ENCODE measurements at regions of chr5 and their contacts with region 1.

Region 1: DNA sequence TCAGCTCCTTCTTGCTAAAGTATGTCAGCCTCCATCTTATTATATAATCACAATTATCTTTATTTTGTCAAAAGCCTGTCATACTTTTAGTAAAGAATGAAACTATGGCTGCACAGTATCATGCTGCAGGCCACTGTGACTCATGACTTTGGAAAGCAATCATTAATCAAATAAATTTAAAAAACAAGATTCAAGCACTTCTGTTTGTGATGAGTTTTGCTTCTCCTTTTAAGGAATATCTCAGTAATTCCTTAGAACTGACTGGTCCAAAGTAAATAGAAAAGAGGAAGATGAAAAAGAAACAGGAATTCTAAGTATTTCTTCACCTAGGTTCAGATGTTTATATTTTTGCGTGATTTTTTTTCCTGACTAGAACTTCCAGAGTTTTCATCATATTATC is 83.1 kb downstream of the EDIL3 start:
- DNase-seq: no peak
- H3K4me3 ChIP-seq: no peak overlapping the region
- H3K4me3 Mint-ChIP-seq: no peak overlapping the region
- H3K27ac Mint-ChIP-seq: no peak overlapping the region
- H3K4me1 ChIP-seq: no peaks in the 10 kb centered on the region
- H3K4me1 Mint-ChIP-seq: no peaks in the 10 kb centered on the region
- H3K27me3 ChIP-seq: no peaks in the 10 kb centered on the region
- H3K27me3 Mint-ChIP-seq: no peaks in the 10 kb centered on the region
- CTCF ChIP-seq: no peak

Region 2: DNA sequence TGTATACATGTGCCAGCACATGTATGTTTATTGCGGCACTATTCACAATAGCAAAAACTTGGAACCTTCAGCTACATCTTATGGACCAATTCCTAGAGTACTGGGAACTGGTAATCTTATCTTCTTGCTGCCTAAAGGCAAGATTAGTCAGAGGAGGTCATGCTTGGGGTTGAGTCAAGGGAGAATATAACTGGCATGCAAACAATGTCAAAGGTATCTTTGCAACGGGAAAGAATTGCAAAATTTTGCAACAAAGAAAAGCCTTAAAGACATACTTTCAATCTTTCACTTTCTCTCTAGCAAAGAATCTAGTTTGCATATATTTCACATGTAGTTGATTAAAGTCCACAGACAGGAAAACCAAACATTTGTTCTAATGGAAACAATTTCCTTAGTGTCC is 62.0 kb before region 1 on chr5:
- CTCF ChIA-PET with region 1: no interaction called
- POLR2A ChIA-PET with region 1: no interaction called
- intact Hi-C with region 1: loop called (anchors 1 kb)
- DNase-seq: peak in 1 of 2 experiments; percentile 11
- H3K4me3 ChIP-seq: no peak overlapping the region
- H3K4me3 Mint-ChIP-seq: no peak overlapping the region
- H3K27ac Mint-ChIP-seq: no peak overlapping the region
- H3K4me1 ChIP-seq: peaks cover 5% of the 10 kb centered on the region; the same call in 1 of the 2 replicates
- H3K4me1 Mint-ChIP-seq: no peaks in the 10 kb centered on the region
- H3K27me3 ChIP-seq: no peaks in the 10 kb centered on the region
- H3K27me3 Mint-ChIP-seq: no peaks in the 10 kb centered on the region
- CTCF ChIP-seq: no peak